ENCODE measurements at regions of chr1 and their contacts with region 1.

Region 1: GRCh38 chr1:86380257-86380861 is 15.8 kb downstream of the ODF2L start:
- DNase-seq: peak; percentile 40
- ATAC-seq: peak; percentile 57
- H3K4me3 Mint-ChIP-seq: no peak overlapping the region
- H3K27ac Mint-ChIP-seq: no peak overlapping the region
- H3K4me1 Mint-ChIP-seq: peaks cover 14% of the 10 kb centered on the region
- H3K27me3 Mint-ChIP-seq: no peaks in the 10 kb centered on the region

Region 2: DNA sequence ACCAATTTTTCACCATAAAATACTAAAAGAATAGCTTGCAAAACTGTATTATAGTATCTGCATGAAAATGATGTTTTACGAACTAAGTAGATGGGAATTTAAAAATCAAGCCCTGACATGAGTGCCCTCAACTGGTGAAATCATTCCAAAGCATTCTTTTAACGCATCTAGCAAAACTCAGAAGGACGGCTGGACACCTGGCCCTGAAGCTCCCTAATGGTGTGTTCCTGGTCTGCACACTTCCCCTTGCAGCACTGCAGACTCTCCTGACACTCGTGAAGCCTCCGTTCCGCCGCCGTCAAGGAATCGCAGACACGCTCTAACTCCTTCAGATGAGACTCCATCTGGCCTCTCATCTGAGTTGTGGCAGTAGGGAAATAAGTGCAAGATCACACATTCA is 24.1 kb before region 1 on chr1:
- CTCF ChIA-PET with region 1: no interaction called
- POLR2A ChIA-PET with region 1: no interaction called
- DNase-seq: no peak
- ATAC-seq: no peak
- H3K4me3 Mint-ChIP-seq: no peak overlapping the region
- H3K27ac Mint-ChIP-seq: no peak overlapping the region
- H3K4me1 Mint-ChIP-seq: no peaks in the 10 kb centered on the region
- H3K27me3 Mint-ChIP-seq: no peaks in the 10 kb centered on the region

Region 3: GRCh38 chr1:86455073-86455472 is 74.7 kb after region 1 on chr1:
- CTCF ChIA-PET with region 1: no interaction called
- POLR2A ChIA-PET with region 1: no interaction called
- DNase-seq: no peak
- ATAC-seq: no peak
- H3K4me3 Mint-ChIP-seq: no peak overlapping the region
- H3K27ac Mint-ChIP-seq: no peak overlapping the region
- H3K4me1 Mint-ChIP-seq: no peaks in the 10 kb centered on the region
- H3K27me3 Mint-ChIP-seq: peaks cover 8% of the 10 kb centered on the region

Region 4: GRCh38 chr1:86470859-86471258 is 90.5 kb after region 1 on chr1:
- CTCF ChIA-PET with region 1: interaction called, 10 read pairs
- POLR2A ChIA-PET with region 1: no interaction called
- DNase-seq: no peak
- ATAC-seq: no peak
- H3K4me3 Mint-ChIP-seq: no peak overlapping the region
- H3K27ac Mint-ChIP-seq: no peak overlapping the region
- H3K4me1 Mint-ChIP-seq: no peaks in the 10 kb centered on the region
- H3K27me3 Mint-ChIP-seq: peaks cover 20% of the 10 kb centered on the region

Region 5: GRCh38 chr1:86507935-86508582 is 127.7 kb after region 1 on chr1:
- CTCF ChIA-PET with region 1: interaction called, 38 read pairs
- POLR2A ChIA-PET with region 1: no interaction called
- DNase-seq: peak; percentile 30
- ATAC-seq: peak; percentile 44
- H3K4me3 Mint-ChIP-seq: no peak overlapping the region
- H3K27ac Mint-ChIP-seq: no peak overlapping the region
- H3K4me1 Mint-ChIP-seq: peaks cover 5% of the 10 kb centered on the region
- H3K27me3 Mint-ChIP-seq: peaks cover 18% of the 10 kb centered on the region

Region 6: DNA sequence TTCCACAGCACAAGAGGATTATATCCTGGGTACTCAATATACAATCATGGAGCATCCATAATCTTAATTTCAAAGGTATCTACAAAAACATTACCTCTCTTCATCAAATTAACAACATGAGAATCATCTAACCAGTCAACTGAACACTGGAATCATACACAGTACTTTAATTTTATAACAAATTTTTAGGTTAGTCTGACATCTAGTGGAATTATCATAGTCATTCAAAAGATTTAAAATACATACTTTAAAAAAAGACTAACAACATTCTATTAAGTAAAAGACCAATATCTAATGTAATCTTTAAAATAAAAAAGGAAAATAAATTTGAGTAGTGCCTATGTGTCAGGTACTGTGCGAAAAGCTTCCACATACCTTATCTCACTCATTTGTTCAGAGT is 307.2 kb after region 1 on chr1:
- CTCF ChIA-PET with region 1: no interaction called
- POLR2A ChIA-PET with region 1: no interaction called
- DNase-seq: no peak
- ATAC-seq: no peak
- H3K4me3 Mint-ChIP-seq: no peak overlapping the region
- H3K27ac Mint-ChIP-seq: no peak overlapping the region
- H3K4me1 Mint-ChIP-seq: no peaks in the 10 kb centered on the region
- H3K27me3 Mint-ChIP-seq: no peaks in the 10 kb centered on the region

Measured in activated CD8-positive, alpha-beta T cell treated with anti-CD3 and anti-CD28 coated beads, Interleukin-2, amount 10 ng/mL, durations not matched to agents 7 days and 5 days (primary cell).